Activated B cell treated with CpG ODN at 0.5 μM for 24 hours (primary cell): ENCODE measurements at regions of chr15 and their contacts with region 1.

Region 1: DNA sequence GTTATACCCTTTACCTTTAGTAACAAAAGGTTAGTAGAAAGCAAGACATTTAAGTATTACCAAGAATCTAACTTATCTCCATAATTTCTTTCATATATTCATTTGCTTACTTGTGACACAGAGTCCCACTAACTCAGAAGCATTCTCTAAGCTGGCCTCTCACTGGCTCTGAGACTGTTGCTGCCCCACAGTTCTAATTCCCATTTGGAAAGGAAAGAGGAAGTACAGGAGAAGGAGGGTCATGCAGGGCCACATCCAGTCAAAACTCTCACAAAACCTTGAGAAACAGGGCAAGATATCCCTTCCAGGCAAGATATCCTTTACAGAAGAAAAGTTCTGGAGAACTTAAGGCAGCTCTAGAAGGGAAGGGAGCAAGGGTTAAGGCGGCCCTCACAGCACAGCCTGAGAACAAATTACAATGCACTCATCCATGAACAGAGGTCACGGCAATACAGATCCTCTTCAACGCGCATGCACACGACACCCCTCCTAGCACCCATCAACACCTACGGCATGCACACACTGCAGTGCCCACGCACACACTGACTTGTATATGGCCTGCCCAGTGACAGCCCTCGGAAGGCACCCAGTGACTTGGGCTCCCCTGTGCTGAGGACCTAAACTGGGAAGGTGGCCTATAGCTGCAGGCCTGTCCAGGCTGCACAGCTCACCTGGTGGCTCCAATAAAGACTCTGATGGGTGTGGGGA is 13.0 kb upstream of the MYO5C start:
- DNase-seq: no peak
- ATAC-seq: peak; percentile 80
- H3K4me3 Mint-ChIP-seq: peak overlapping the region; percentile 7
- H3K27ac Mint-ChIP-seq: peak overlapping the region; percentile 80
- H3K4me1 Mint-ChIP-seq: peaks cover 23% of the 10 kb centered on the region
- H3K27me3 Mint-ChIP-seq: no peaks in the 10 kb centered on the region
- CTCF ChIP-seq: no peak

Region 2: DNA sequence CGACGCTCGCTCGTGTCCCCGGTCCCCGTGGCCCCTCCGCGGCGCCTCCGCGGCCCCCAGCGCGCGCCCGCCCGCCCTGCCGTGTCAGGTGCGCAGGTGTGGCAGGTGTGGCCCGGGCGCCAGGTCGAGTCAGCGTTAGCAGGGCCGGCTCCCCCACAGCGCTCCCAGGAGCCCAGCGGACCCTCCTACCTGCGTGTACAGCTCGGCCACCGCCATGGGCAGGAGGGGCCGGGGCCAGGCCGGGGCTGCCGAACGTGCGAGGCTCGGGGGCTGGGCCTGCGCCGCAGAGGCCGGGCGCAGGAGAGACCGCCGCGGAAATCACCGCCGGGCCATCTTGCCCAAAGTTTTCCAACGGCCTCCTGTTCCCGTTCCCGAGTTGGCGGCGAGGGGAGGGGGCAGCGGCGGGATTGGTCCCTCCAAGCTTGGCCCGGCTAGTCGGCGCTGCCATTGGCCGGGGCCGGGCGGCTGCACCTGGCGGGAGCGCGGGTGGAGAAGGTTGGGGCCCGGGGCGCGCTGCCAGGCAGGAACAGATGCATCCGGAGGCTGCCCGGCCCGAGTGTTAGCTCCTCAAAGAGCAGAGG is 13.1 kb before region 1 on chr15 and contains the start of gene MYO5C:
- CTCF ChIA-PET with region 1: no interaction called
- POLR2A ChIA-PET with region 1: interaction called, 8 read pairs
- intact Hi-C with region 1: loop called (anchors 1 kb)
- DNase-seq: no peak
- ATAC-seq: peak; percentile 41
- H3K4me3 Mint-ChIP-seq: peak within 1 kb of the TSS; percentile 55
- H3K27ac Mint-ChIP-seq: no peak within 1 kb of the TSS
- H3K4me1 Mint-ChIP-seq: peaks cover 25% of the 10 kb centered on the region
- H3K27me3 Mint-ChIP-seq: peaks cover 10% of the 10 kb centered on the region
- CTCF ChIP-seq: no peak
- total RNA-seq, gene MYO5C: 2.4 and 3.3 TPM in 2 replicates

Region 3: DNA sequence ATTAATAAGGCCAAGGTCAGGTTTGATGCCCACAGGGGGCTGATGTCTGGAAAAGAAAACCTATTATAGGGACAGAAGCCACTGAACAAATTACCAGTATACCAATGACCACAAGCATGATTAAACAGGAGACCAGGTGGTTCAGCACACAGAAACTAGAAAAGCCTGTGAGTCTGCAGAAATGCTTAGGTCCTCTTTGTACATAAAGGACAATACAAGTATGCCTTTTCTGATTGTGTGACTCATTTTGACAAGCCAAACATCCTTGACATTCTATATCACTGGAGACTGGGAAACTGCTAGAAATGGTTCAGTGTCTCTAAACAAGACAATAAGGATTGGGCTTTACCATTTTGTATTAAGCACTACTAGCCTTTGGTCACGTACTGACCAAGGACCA is 100.2 kb after region 1 on chr15:
- CTCF ChIA-PET with region 1: no interaction called
- POLR2A ChIA-PET with region 1: interaction called, 13 read pairs
- intact Hi-C with region 1: no loop called
- DNase-seq: no peak
- ATAC-seq: no peak
- H3K4me3 Mint-ChIP-seq: no peak overlapping the region
- H3K27ac Mint-ChIP-seq: no peak overlapping the region
- H3K4me1 Mint-ChIP-seq: no peaks in the 10 kb centered on the region
- H3K27me3 Mint-ChIP-seq: no peaks in the 10 kb centered on the region
- CTCF ChIP-seq: no peak